Panc1 (cell line): ENCODE measurements at regions of chr7 and their contacts with region 1.

Region 1: DNA sequence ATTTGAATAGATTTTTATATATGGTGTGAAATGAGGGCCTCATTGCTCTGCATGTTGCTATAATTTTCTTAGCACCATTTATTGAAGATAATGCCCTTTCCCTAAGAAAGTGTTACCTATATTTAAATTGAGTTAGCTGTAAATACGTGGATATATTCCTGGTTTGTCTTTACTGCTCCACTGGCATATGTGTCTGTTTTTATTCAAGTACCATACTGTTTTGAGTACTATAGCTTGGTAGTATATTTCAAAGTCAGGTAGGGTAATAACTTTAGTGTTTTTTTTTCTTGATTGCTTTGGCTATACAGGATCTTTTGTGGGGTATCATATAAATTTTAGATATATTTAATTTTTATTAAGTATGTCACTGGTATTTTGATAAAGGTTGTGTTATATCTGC is 31.4 kb downstream of the ZNF273 start:
- DNase-seq: no peak
- ATAC-seq: no peak
- H3K4me3 ChIP-seq: no peak overlapping the region
- H3K27ac ChIP-seq: no peak overlapping the region
- H3K4me1 ChIP-seq: no peaks in the 10 kb centered on the region
- H3K27me3 ChIP-seq: no peaks in the 10 kb centered on the region
- CTCF ChIP-seq: no peak

Region 2: GRCh38 chr7:64992971-64993370 is 58.5 kb after region 1 on chr7:
- CTCF ChIA-PET with region 1: no interaction called
- POLR2A ChIA-PET with region 1: no interaction called
- in situ Hi-C with region 1: no loop called
- intact Hi-C with region 1: loop called (anchors 10 kb)
- DNase-seq: no peak
- ATAC-seq: no peak
- H3K4me3 ChIP-seq: no peak overlapping the region
- H3K27ac ChIP-seq: no peak overlapping the region
- H3K4me1 ChIP-seq: no peaks in the 10 kb centered on the region
- H3K27me3 ChIP-seq: no peaks in the 10 kb centered on the region
- CTCF ChIP-seq: no peak

Region 3: GRCh38 chr7:65325793-65326432 is 391.4 kb after region 1 on chr7:
- CTCF ChIA-PET with region 1: no interaction called
- POLR2A ChIA-PET with region 1: no interaction called
- in situ Hi-C with region 1: no loop called
- intact Hi-C with region 1: no loop called
- DNase-seq: no peak
- ATAC-seq: no peak; the same call in 1 of the 2 replicates
- H3K4me3 ChIP-seq: no peak overlapping the region
- H3K27ac ChIP-seq: no peak overlapping the region
- H3K4me1 ChIP-seq: no peaks in the 10 kb centered on the region
- H3K27me3 ChIP-seq: no peaks in the 10 kb centered on the region
- CTCF ChIP-seq: no peak